ENCODE measurements at regions of chr6 and their contacts with region 1.

Region 1: DNA sequence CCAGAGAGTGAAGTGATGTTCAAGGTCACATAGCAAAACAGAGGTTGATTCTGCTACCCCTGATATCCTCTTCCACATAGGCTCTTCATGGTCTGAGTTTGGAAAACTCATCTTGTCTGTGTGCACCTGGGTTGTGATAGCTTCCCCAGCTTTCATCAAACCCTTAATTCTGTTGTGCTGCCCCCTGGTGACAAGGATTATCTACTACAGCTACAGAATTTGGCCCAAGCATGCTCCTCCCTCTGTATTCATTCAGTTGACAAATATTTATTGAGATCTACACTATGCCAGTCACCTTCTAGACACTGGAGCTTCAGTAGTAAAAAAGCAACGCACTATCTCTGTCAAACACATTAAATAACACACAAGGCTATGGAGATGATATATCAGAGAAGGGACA is 50.4 kb downstream of the SMPDL3A start:
- H3K4me3 ChIP-seq: no peak overlapping the region
- H3K27ac ChIP-seq: no peak overlapping the region
- H3K4me1 ChIP-seq: no peaks in the 10 kb centered on the region
- CTCF ChIP-seq: 0 out of 2 replicates have a peak, but pooled peaks have one; percentile 21

Region 2: DNA sequence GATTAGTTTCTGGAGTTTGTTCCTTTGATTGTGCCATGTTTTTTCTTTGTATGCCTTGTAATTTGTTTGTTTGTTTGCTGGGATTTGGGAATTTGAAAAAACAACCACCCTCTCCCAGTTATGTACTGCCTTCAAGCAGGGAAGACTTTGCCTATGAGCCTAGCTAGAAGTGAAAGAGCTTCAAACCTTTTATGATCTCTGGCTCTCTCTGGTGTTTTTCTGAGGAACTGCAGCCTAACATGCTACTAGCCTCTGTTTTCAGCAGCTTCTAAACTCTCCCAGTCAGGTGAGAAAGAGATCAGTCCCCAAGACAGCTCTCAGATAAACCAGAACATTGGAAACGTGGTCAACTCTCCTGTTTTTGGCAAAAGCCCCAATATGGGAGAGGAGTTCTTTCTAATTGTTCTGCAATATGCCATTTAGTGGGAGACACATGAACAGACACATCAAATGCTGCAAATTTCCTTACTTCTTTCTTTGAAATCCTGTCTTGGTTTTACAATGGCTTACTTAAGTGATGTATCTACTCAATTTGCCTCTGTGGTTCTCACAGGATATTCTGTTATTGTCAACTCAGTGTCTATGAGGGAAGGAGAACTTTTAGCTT is 308.9 kb before region 1 on chr6:
- CTCF ChIA-PET with region 1: interaction called, 22 read pairs
- POLR2A ChIA-PET with region 1: no interaction called
- H3K4me3 ChIP-seq: no peak overlapping the region
- H3K27ac ChIP-seq: no peak overlapping the region
- H3K4me1 ChIP-seq: no peaks in the 10 kb centered on the region
- CTCF ChIP-seq: peak; percentile 35; the same call in 1 of the 2 replicates

Region 3: GRCh38 chr6:122653094-122653493 is 186.4 kb before region 1 on chr6:
- CTCF ChIA-PET with region 1: no interaction called
- POLR2A ChIA-PET with region 1: no interaction called
- H3K4me3 ChIP-seq: no peak overlapping the region
- H3K27ac ChIP-seq: no peak overlapping the region
- H3K4me1 ChIP-seq: peaks cover 5% of the 10 kb centered on the region; the same call in 1 of the 2 replicates
- CTCF ChIP-seq: no peak

Region 4: GRCh38 chr6:122736616-122737015 is 102.9 kb before region 1 on chr6:
- CTCF ChIA-PET with region 1: interaction called, 196 read pairs
- POLR2A ChIA-PET with region 1: interaction called, 6 read pairs
- H3K4me3 ChIP-seq: no peak overlapping the region
- H3K27ac ChIP-seq: no peak overlapping the region
- H3K4me1 ChIP-seq: no peaks in the 10 kb centered on the region
- CTCF ChIP-seq: no peak

Region 5: GRCh38 chr6:122789182-122790027 is 50.1 kb before region 1 on chr6 and contains the start of gene SMPDL3A:
- CTCF ChIA-PET with region 1: interaction called, 24 read pairs
- POLR2A ChIA-PET with region 1: interaction called, 6 read pairs
- H3K4me3 ChIP-seq: peak within 1 kb of the TSS; percentile 66
- H3K27ac ChIP-seq: peak within 1 kb of the TSS; percentile 78
- H3K4me1 ChIP-seq: peaks cover 12% of the 10 kb centered on the region
- CTCF ChIP-seq: peak; percentile 94

Region 6: DNA sequence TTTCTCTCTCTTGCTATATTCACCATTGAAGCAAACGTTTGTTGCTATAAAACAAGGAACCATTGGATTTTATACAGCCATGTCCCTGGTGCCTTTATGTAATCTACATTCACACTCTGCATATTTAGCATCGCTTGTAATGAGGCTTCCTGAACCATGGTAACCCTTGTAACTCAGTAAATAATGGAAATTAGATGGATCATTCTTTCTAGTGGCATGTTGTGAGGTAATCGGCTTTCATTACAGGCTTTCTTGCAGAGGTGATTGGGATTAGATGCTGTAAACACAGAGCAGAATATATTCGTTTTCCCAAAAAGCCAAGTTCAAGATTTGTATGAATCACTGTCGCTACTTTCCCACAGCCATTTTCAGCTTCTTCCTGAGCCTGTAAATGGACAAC is 14.3 kb before region 1 on chr6:
- CTCF ChIA-PET with region 1: interaction called, 18 read pairs
- POLR2A ChIA-PET with region 1: no interaction called
- H3K4me3 ChIP-seq: no peak overlapping the region
- H3K27ac ChIP-seq: no peak overlapping the region
- H3K4me1 ChIP-seq: no peaks in the 10 kb centered on the region
- CTCF ChIP-seq: no peak

Region 7: DNA sequence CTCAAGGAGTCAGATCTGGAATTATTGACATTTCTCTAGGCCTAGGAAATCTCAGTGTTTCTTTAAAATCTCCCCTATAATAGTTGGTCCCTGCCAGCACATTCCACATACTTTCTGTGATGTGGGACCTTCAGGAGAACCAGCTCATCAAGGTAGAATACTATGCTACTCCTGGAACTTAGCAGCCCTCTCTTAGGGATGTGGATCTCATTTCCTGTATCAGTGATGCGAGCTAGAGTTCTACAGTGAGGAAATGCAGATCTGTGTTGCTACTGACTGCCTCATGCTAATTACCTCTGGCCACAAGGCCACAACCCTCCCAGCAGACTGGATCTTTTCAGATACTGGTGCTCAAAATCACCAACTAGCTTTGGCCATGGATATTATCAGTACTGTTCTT is 350.3 kb after region 1 on chr6:
- CTCF ChIA-PET with region 1: no interaction called
- POLR2A ChIA-PET with region 1: no interaction called
- H3K4me3 ChIP-seq: no peak overlapping the region
- H3K27ac ChIP-seq: no peak overlapping the region
- H3K4me1 ChIP-seq: no peaks in the 10 kb centered on the region
- CTCF ChIP-seq: no peak